Naive thymus-derived CD4-positive, alpha-beta T cell (primary cell): ENCODE measurements at regions of chr12 and their contacts with region 1.

Region 1: DNA sequence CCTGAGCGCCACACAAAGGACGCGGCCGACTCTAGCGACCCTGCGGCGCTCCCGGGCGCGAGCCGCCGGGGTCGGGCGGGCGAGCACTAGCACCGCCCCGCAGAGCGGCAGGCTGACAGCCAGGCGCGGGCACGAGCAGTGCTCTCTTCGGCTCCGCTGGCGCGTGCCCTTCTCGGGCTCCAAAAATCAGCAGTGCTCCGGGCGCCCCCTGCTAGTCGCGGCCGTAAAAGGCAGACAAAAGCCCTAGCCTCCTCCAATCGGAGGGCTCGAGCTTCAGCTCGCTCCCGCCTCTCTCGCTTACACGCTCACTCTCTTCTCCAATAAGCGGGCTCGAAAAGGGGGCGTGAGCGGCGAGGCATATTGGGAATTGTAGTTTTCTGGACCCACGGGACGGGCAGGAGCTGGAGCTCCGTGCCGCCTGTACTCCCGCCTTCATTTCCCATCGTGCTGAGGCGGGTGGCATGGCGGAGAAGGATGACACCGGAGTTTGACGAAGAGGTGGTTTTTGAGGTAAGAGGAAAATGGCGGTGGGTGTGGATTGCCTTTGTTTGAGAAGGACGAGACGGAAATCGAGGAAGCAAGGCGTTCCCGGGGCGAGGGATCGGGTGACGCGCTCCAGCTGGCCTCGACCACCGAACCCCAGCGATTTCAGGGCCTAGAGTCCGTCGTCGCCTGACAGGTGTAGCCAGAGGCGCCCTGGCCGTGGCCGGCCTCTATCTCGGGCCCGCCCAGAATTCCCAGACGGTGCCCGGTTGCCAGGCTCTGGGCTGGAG is at the starts of genes FGD6 and VEZT:
- DNase-seq: peak; percentile 90 to 99 (median 98)
- ATAC-seq: peak; percentile 94
- H3K4me3 ChIP-seq: peak within 1 kb of the TSS; percentile 87
- H3K4me3 Mint-ChIP-seq: peak within 1 kb of the TSS; percentile 88 to 100 (median 96)
- H3K27ac ChIP-seq: peak within 1 kb of the TSS; percentile 94
- H3K27ac Mint-ChIP-seq: peak within 1 kb of the TSS; percentile 86 to 97 (median 95)
- H3K4me1 ChIP-seq: peaks cover 0 to 8% of the 10 kb centered on the region in 2 donors
- H3K4me1 Mint-ChIP-seq: peaks cover 25 to 53% (median 45%) of the 10 kb centered on the region in 7 donors
- H3K27me3 ChIP-seq: no peaks in the 10 kb centered on the region
- H3K27me3 Mint-ChIP-seq: peaks cover 0 to 20% (median 7%) of the 10 kb centered on the region in 5 donors
- total RNA-seq, gene FGD6: 0.70 to 8.6 (median 1.1) TPM
- total RNA-seq, gene VEZT: 37.2 to 48.8 (median 44.2) TPM

Region 2: GRCh38 chr12:93441617-93442410 is 1775.7 kb before region 1 on chr12 and contains the start of gene UBE2N:
- CTCF ChIA-PET with region 1: no interaction called
- POLR2A ChIA-PET with region 1: interaction called, 3 read pairs
- intact Hi-C with region 1: loop called (anchors 1 to 5 kb)
- DNase-seq: peak; percentile 96 to 98 (median 97)
- ATAC-seq: peak; percentile 95
- H3K4me3 ChIP-seq: peak within 1 kb of the TSS; percentile 66
- H3K4me3 Mint-ChIP-seq: peak within 1 kb of the TSS; percentile 89 to 100 (median 97)
- H3K27ac ChIP-seq: peak within 1 kb of the TSS; percentile 98
- H3K27ac Mint-ChIP-seq: peak within 1 kb of the TSS; percentile 96 to 100 (median 98)
- H3K4me1 ChIP-seq: peaks cover 35 to 48% of the 10 kb centered on the region in 2 donors
- H3K4me1 Mint-ChIP-seq: peaks cover 44 to 54% (median 49%) of the 10 kb centered on the region in 7 donors
- H3K27me3 ChIP-seq: no peaks in the 10 kb centered on the region
- H3K27me3 Mint-ChIP-seq: no peaks in the 10 kb centered on the region
- total RNA-seq, gene UBE2N: 76.6 to 180 (median 77.5) TPM

Region 3: DNA sequence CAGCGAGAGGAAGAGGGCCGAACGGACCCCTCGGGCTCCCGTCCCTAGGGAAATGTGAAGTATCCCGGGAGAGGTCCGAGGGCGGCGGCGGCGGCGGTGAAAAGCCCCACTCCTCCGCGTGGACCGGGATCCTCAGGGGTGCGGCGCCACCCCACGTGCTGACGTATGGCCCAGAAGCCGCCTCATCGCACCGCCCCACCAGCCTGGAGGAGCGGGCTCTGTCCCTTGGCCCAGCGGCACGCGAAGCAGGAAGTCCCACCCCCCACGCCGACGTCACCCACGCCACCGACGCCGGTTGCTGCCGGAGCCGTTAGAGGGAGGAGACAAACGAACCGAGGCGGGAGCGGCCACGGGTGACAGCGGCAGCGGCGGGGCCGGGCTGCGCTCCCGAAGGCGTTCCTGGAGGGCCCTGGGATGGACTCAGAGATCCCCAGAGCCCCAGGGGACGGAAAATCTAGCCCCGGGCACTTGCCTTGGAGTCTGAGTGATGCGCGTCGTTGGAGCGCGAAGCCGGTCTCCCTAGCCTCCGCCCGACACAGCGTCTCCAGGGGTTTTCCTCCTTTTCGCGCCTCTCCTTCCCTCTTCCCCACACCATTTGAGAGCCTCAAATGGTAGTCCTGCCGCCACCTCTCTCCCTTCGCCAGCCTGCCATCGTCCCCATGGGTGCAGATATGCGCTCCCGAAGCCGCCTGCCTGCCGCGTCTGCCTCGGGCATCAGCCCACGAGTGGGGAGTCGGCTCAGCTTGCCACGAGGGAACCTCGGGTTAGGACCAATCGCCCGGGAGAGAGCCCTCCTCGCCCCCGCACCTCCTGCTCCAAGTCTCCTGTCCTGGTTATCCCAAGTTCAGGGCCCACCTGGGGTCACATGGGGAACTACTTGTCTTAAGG is 757.6 kb before region 1 on chr12 and contains the start of gene CEP83:
- CTCF ChIA-PET with region 1: no interaction called
- POLR2A ChIA-PET with region 1: no interaction called
- intact Hi-C with region 1: loop called (anchors 1 kb)
- DNase-seq: peak; percentile 89 to 97 (median 94)
- ATAC-seq: peak; percentile 99
- H3K4me3 ChIP-seq: peak within 1 kb of the TSS; percentile 68
- H3K4me3 Mint-ChIP-seq: peak within 1 kb of the TSS; percentile 92 to 98 (median 96)
- H3K27ac ChIP-seq: peak within 1 kb of the TSS; percentile 91
- H3K27ac Mint-ChIP-seq: peak within 1 kb of the TSS; percentile 70 to 97 (median 94)
- H3K4me1 ChIP-seq: peaks cover 3 to 13% of the 10 kb centered on the region in 2 donors
- H3K4me1 Mint-ChIP-seq: peaks cover 10 to 38% (median 30%) of the 10 kb centered on the region in 7 donors
- H3K27me3 ChIP-seq: no peaks in the 10 kb centered on the region
- H3K27me3 Mint-ChIP-seq: peaks cover 0 to 12% (median 6%) of the 10 kb centered on the region in 5 donors
- total RNA-seq, gene CEP83: 12.8 to 22.7 (median 16.8) TPM

Region 4: GRCh38 chr12:95072900-95073697 is 144.5 kb before region 1 on chr12 and contains the start of gene NR2C1:
- CTCF ChIA-PET with region 1: no interaction called
- POLR2A ChIA-PET with region 1: interaction called, 12 read pairs
- intact Hi-C with region 1: loop called (anchors 1 kb)
- DNase-seq: peak; percentile 76 to 95 (median 92)
- ATAC-seq: peak; percentile 98
- H3K4me3 ChIP-seq: peak within 1 kb of the TSS; percentile 81
- H3K4me3 Mint-ChIP-seq: peak within 1 kb of the TSS; percentile 92 to 98 (median 94)
- H3K27ac ChIP-seq: peak within 1 kb of the TSS; percentile 81
- H3K27ac Mint-ChIP-seq: peak within 1 kb of the TSS; percentile 84 to 96 (median 93)
- H3K4me1 ChIP-seq: peaks cover 0 to 9% of the 10 kb centered on the region in 2 donors
- H3K4me1 Mint-ChIP-seq: peaks cover 8 to 40% (median 30%) of the 10 kb centered on the region in 7 donors
- H3K27me3 ChIP-seq: no peaks in the 10 kb centered on the region
- H3K27me3 Mint-ChIP-seq: peaks cover 0 to 5% (median 0%) of the 10 kb centered on the region in 5 donors
- total RNA-seq, gene NR2C1: 30.5 to 66.8 (median 58.7) TPM

Region 5: GRCh38 chr12:95428472-95428871 is 210.9 kb after region 1 on chr12:
- CTCF ChIA-PET with region 1: no interaction called
- POLR2A ChIA-PET with region 1: no interaction called
- intact Hi-C with region 1: loop called in 1 of 2 experiments (anchors 1 kb)
- DNase-seq: peak in 8 of 9 donors; percentile 21 to 70 (median 47)
- ATAC-seq: peak; percentile 96
- H3K4me3 ChIP-seq: peak overlapping the region; percentile 32
- H3K4me3 Mint-ChIP-seq: peak overlapping the region; percentile 72 to 91 (median 76)
- H3K27ac ChIP-seq: peak overlapping the region; percentile 53
- H3K27ac Mint-ChIP-seq: peak overlapping the region; percentile 87 to 97 (median 89)
- H3K4me1 ChIP-seq: no peaks in the 10 kb centered on the region
- H3K4me1 Mint-ChIP-seq: peaks cover 10 to 20% (median 15%) of the 10 kb centered on the region in 7 donors
- H3K27me3 ChIP-seq: no peaks in the 10 kb centered on the region
- H3K27me3 Mint-ChIP-seq: peaks cover 0 to 8% (median 0%) of the 10 kb centered on the region in 5 donors

Region 6: GRCh38 chr12:95858479-95859343 is 641.1 kb after region 1 on chr12 and contains the start of gene SNRPF:
- CTCF ChIA-PET with region 1: no interaction called
- POLR2A ChIA-PET with region 1: no interaction called
- intact Hi-C with region 1: loop called (anchors 1 kb)
- DNase-seq: peak; percentile 88 to 96 (median 92)
- ATAC-seq: peak; percentile 98
- H3K4me3 ChIP-seq: peak within 1 kb of the TSS; percentile 82
- H3K4me3 Mint-ChIP-seq: no peak within 1 kb of the TSS
- H3K27ac ChIP-seq: peak within 1 kb of the TSS; percentile 86
- H3K27ac Mint-ChIP-seq: no peak within 1 kb of the TSS
- H3K4me1 ChIP-seq: peaks cover 11 to 12% of the 10 kb centered on the region in 2 donors
- H3K4me1 Mint-ChIP-seq: peaks cover 13 to 27% (median 16%) of the 10 kb centered on the region in 7 donors
- H3K27me3 ChIP-seq: no peaks in the 10 kb centered on the region
- H3K27me3 Mint-ChIP-seq: peaks cover 3 to 11% (median 7%) of the 10 kb centered on the region in 5 donors
- total RNA-seq, gene SNRPF: 19.0 to 40.4 (median 21.7) TPM

Region 7: DNA sequence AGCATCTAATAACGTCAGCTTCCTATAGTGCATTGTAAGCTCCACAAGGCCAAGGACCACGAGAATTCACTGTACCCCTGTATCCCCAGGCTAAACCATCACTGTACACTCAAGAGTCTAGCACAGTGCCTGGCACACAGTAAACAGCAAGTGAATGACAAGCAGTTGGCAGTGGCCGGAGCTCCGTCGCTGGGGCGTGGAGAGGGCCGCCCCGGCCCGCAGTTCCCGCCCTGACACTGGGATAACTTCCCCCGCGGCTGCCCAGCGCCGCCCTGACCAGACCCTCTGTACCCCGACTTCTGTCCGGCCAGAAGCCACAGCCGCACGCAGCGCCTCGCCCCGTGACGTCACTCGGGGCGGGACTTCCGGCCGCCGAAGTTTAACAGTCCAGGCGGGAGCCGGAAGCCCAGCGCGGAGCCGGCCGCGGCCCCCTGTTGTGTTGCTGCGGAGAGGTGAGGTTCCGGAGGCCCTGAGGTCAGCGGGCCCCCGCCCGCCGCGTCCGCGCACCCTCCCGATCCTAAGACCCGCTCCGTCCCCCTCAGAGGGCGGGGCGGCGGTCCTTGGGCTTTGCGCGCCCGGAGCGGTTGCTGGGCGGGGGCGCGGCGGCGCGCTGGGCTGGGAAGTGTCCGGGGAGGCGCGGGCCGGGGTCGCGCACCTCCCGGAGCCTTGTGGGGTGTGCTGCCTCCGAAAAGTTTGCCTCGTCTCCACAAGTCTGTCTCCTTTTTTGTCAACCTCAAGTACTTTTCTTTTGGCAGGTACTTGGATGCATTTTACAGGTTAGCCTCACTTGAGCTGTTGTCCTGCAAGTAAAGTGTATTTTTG is 1689.5 kb after region 1 on chr12 and contains the start of gene NEDD1:
- CTCF ChIA-PET with region 1: no interaction called
- POLR2A ChIA-PET with region 1: no interaction called
- intact Hi-C with region 1: loop called in 1 of 2 experiments (anchors 5 kb)
- DNase-seq: peak; percentile 70 to 89 (median 81)
- ATAC-seq: peak; percentile 90
- H3K4me3 ChIP-seq: peak within 1 kb of the TSS; percentile 84
- H3K4me3 Mint-ChIP-seq: peak within 1 kb of the TSS; percentile 89 to 97 (median 95)
- H3K27ac ChIP-seq: peak within 1 kb of the TSS; percentile 99
- H3K27ac Mint-ChIP-seq: peak within 1 kb of the TSS; percentile 96 to 99 (median 98)
- H3K4me1 ChIP-seq: peaks cover 0 to 12% of the 10 kb centered on the region in 2 donors
- H3K4me1 Mint-ChIP-seq: peaks cover 21 to 53% (median 47%) of the 10 kb centered on the region in 7 donors
- H3K27me3 ChIP-seq: no peaks in the 10 kb centered on the region
- H3K27me3 Mint-ChIP-seq: peaks cover 0 to 12% (median 0%) of the 10 kb centered on the region in 5 donors
- total RNA-seq, gene NEDD1: 18.3 to 52.4 (median 23.2) TPM